T-cell (primary cell): ENCODE measurements at regions of chr10 and their contacts with region 1.

Region 1: GRCh38 chr10:27685681-27686080 is 59.9 kb downstream of the MKX start:
- DNase-seq: no peak
- ATAC-seq: no peak
- H3K4me3 ChIP-seq: no peak overlapping the region
- H3K4me3 Mint-ChIP-seq: no peak overlapping the region
- H3K27ac ChIP-seq: no peak overlapping the region
- H3K27ac Mint-ChIP-seq: no peak overlapping the region
- H3K4me1 ChIP-seq: no peaks in the 10 kb centered on the region
- H3K4me1 Mint-ChIP-seq: no peaks in the 10 kb centered on the region
- H3K27me3 ChIP-seq: peaks cover 0 to 3% of the 10 kb centered on the region in 2 experiments
- H3K27me3 Mint-ChIP-seq: peaks cover 21 to 26% of the 10 kb centered on the region in 2 donors

Region 2: GRCh38 chr10:27671821-27672220 is 13.9 kb before region 1 on chr10:
- CTCF ChIA-PET with region 1: no interaction called
- POLR2A ChIA-PET with region 1: no interaction called
- DNase-seq: no peak
- ATAC-seq: no peak
- H3K4me3 ChIP-seq: no peak overlapping the region
- H3K4me3 Mint-ChIP-seq: no peak overlapping the region
- H3K27ac ChIP-seq: no peak overlapping the region
- H3K27ac Mint-ChIP-seq: no peak overlapping the region
- H3K4me1 ChIP-seq: no peaks in the 10 kb centered on the region
- H3K4me1 Mint-ChIP-seq: no peaks in the 10 kb centered on the region
- H3K27me3 ChIP-seq: no peaks in the 10 kb centered on the region
- H3K27me3 Mint-ChIP-seq: peaks cover under 1 to 3% of the 10 kb centered on the region in 2 donors

Region 3: DNA sequence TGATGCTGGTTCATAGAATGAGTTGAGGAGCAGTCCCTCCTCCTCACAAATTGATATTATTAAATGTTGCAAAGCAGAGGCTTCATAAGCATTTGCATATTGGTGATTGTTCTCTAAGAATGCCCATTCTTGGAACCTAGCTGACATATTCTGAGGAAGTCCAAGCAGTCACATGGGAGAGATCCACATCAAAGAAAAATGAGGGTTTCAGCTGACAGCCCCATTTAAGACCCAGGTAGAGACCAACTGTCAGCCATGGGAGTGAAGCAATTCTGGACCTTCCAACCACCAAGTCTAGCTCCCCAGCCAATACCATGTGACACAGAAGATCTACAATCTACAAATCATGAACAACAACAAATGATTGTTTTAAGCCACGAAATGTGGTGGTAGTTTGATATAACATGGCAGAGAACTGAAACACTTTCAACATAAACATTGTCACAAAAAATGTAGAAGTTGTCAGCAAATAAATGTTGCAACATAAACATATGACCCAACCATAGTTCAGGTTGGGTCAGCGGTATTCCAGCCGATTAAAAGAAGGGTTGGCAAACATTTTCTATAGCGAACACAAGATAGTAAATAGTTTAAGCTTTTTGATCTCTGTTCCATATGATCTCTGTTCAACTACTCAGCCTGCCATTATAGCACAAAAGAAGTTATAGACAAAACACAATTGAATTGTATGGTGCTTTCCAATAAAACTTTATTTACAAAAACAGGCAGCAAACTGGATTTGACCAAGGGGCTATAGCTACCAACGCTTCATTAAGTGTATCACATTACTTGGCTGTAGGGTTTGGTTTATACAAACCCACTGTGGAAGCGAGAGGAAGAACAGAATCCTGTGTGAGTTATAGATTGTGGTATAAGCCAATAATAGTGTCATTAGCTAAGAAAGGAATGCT is 658.6 kb after region 1 on chr10:
- CTCF ChIA-PET with region 1: no interaction called
- POLR2A ChIA-PET with region 1: interaction called in 1 of 2 experiments, 10 read pairs
- DNase-seq: no peak
- ATAC-seq: no peak
- H3K4me3 ChIP-seq: no peak overlapping the region
- H3K4me3 Mint-ChIP-seq: no peak overlapping the region
- H3K27ac ChIP-seq: no peak overlapping the region
- H3K27ac Mint-ChIP-seq: no peak overlapping the region
- H3K4me1 ChIP-seq: peaks cover under 1 to 4% of the 10 kb centered on the region in 2 experiments
- H3K4me1 Mint-ChIP-seq: peaks cover 5 to 11% (median 6%) of the 10 kb centered on the region in 3 donors
- H3K27me3 ChIP-seq: no peaks in the 10 kb centered on the region
- H3K27me3 Mint-ChIP-seq: no peaks in the 10 kb centered on the region